ENCODE measurements at regions of chr6 and their contacts with region 1.

Region 1: GRCh38 chr6:89412071-89413005 is at the start of gene RRAGD:
- DNase-seq: peak; percentile 82 to 91
- ATAC-seq: peak; percentile 85 to 91
- H3K4me3 ChIP-seq: peak within 1 kb of the TSS; percentile 89 to 97 (median 93)
- H3K27ac ChIP-seq: peak within 1 kb of the TSS; percentile 98 to 99 (median 99)
- H3K4me1 ChIP-seq: peaks cover 36 to 37% of the 10 kb centered on the region in 2 donors
- H3K27me3 ChIP-seq: no peaks in the 10 kb centered on the region
- CTCF ChIP-seq: peak in 3 of 5 experiments; percentile 20 to 47 (median 22)
- POLR2A ChIP-seq: peak; percentile 93 to 95
- total RNA-seq, gene RRAGD: 53.6 to 173 (median 106) TPM

Region 2: DNA sequence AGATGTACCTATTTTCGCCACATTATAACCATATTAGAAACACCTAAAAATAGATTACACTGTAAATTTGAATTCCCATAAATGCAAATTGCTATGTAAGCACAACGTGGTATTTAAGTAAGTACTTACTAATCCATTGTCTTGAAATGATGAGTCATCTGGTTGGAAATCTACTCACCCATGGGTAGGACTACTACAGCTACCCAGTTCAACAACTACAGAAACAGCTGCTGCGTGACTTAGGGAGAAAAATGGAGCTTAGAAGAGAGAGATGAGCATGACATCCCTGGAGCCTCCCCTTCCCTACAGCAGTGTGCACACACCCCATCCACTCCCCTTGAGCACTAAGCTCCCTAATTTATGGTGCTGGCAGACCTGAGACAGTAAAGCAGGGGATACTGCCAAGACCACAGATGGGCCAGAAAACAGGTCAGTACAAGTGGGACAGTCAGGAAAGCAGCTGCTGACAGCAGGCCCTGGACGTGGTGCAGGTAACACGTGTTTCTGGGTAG is 27.1 kb before region 1 on chr6:
- in situ Hi-C with region 1: no loop called
- intact Hi-C with region 1: loop called (anchors 2 kb)
- DNase-seq: peak; percentile 78 to 82
- ATAC-seq: peak; percentile 87 to 90
- H3K4me3 ChIP-seq: no peak overlapping the region
- H3K27ac ChIP-seq: peak overlapping the region; percentile 75 to 86 (median 81)
- H3K4me1 ChIP-seq: peaks cover 57 to 60% of the 10 kb centered on the region in 2 donors
- H3K27me3 ChIP-seq: no peaks in the 10 kb centered on the region
- CTCF ChIP-seq: no peak
- POLR2A ChIP-seq: no peak

Region 3: GRCh38 chr6:89559487-89559886 is 147.1 kb after region 1 on chr6:
- in situ Hi-C with region 1: no loop called
- intact Hi-C with region 1: no loop called
- DNase-seq: no peak
- ATAC-seq: no peak
- H3K4me3 ChIP-seq: no peak overlapping the region
- H3K27ac ChIP-seq: no peak overlapping the region
- H3K4me1 ChIP-seq: peaks cover 7 to 16% of the 10 kb centered on the region in 2 donors
- H3K27me3 ChIP-seq: no peaks in the 10 kb centered on the region
- CTCF ChIP-seq: no peak
- POLR2A ChIP-seq: no peak

Measured in gastrocnemius medialis (tissue), 4 donors.